A673 (cell line): ENCODE measurements at regions of chr6 and their contacts with region 1.

Region 1: DNA sequence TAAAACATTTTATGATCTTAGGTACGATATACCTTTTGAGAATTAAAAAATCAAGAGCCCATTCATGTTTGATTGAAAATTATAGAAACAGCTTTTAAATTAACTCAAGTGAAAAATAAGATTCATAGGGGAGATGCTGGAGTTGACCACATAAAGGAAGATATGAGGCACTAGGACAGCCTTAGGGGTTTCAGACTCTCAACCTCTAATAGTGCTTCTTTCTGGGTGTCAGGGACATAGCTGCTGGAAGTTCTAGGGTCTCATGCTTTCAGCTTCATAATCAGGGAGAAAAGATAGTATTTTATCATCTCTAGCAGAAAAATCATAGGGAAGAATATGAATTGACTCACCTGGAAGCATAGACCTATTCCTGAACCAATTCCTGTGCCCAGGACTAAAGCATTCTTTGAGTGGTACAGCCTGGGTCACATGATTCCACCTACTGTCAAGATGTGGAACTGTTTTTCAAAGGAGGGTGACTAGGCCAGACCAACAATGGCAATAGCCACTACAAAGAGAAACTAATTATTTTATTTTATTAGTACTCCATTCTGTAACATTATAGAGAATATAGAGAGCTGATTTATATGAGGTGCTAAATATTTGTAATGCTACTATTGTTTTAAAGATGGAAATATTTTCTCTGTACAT is 27.8 kb upstream of the CENPW start:
- DNase-seq: peak; percentile 11
- H3K4me3 ChIP-seq: no peak overlapping the region
- H3K27ac ChIP-seq: no peak overlapping the region
- H3K4me1 ChIP-seq: no peaks in the 10 kb centered on the region
- H3K27me3 ChIP-seq: no peaks in the 10 kb centered on the region
- CTCF ChIP-seq: peak; percentile 47

Region 2: DNA sequence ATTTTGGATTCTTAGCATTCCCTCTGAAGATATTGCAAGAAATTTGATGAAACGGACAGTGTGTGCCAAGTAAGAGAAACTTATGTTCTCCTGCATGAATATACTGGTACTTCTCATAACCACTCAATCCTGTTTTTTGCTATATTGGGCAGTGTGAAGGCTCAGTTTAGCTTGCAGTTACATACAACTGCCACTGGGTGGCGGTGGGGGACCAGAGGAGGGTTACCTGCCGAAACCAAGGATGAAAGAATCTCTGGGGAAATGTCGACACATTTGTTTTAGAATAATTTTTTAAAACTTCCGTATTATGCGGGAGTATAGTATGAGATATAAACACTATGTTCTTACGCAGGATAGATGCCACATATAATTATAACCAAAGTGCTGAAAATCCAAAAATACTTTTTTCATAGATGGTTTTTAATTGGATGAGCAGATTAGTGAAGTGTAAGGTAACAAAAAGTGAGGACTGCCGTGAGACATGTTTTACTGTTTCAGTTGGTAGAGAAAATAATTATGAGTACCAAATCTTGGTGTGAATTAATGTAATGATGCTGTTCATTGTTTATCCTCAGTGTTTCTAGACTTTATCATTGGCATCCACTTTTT is 316.1 kb before region 1 on chr6:
- CTCF ChIA-PET with region 1: no interaction called
- POLR2A ChIA-PET with region 1: no interaction called
- intact Hi-C with region 1: loop called (anchors 10 kb)
- DNase-seq: peak; percentile 82
- H3K4me3 ChIP-seq: no peak overlapping the region
- H3K27ac ChIP-seq: no peak overlapping the region
- H3K4me1 ChIP-seq: peaks cover 5% of the 10 kb centered on the region
- H3K27me3 ChIP-seq: no peaks in the 10 kb centered on the region
- CTCF ChIP-seq: peak; percentile 98